ENCODE measurements at regions of chr12 and their contacts with region 1.

Region 1: GRCh38 chr12:93297032-93297431 is 80.7 kb upstream of the NUDT4 start:
- DNase-seq: no peak
- H3K4me3 ChIP-seq: no peak overlapping the region
- H3K27ac ChIP-seq: no peak overlapping the region
- H3K4me1 ChIP-seq: peaks cover 0 to 42% (median 13%) of the 10 kb centered on the region in 4 donors
- H3K27me3 ChIP-seq: no peaks in the 10 kb centered on the region
- CTCF ChIP-seq: no peak

Region 2: GRCh38 chr12:93894391-93895088 is 597.5 kb after region 1 on chr12:
- intact Hi-C with region 1: loop called (anchors 5 kb)
- DNase-seq: peak; percentile 82 to 93
- H3K4me3 ChIP-seq: peak overlapping the region; percentile 24 to 37
- H3K27ac ChIP-seq: peak overlapping the region; percentile 78 to 81
- H3K4me1 ChIP-seq: peaks cover 0 to 26% (median 19%) of the 10 kb centered on the region in 4 donors
- H3K27me3 ChIP-seq: no peaks in the 10 kb centered on the region
- CTCF ChIP-seq: no peak

Measured in tibial artery (tissue), 4 donors.